ENCODE measurements at regions of chr12 and their contacts with region 1.

Region 1: GRCh38 chr12:6925540-6926279 is 2.0 kb upstream of the ATN1 start:
- DNase-seq: no peak
- ATAC-seq: no peak
- H3K4me3 ChIP-seq: no peak overlapping the region
- H3K4me3 Mint-ChIP-seq: peak overlapping the region; percentile 61 to 85 (median 82)
- H3K27ac ChIP-seq: no peak overlapping the region
- H3K27ac Mint-ChIP-seq: peak overlapping the region; percentile 31 to 44
- H3K4me1 ChIP-seq: peaks cover 10 to 38% of the 10 kb centered on the region in 2 experiments
- H3K4me1 Mint-ChIP-seq: peaks cover 36 to 54% (median 48%) of the 10 kb centered on the region in 3 donors
- H3K27me3 ChIP-seq: no peaks in the 10 kb centered on the region
- H3K27me3 Mint-ChIP-seq: no peaks in the 10 kb centered on the region

Region 2: DNA sequence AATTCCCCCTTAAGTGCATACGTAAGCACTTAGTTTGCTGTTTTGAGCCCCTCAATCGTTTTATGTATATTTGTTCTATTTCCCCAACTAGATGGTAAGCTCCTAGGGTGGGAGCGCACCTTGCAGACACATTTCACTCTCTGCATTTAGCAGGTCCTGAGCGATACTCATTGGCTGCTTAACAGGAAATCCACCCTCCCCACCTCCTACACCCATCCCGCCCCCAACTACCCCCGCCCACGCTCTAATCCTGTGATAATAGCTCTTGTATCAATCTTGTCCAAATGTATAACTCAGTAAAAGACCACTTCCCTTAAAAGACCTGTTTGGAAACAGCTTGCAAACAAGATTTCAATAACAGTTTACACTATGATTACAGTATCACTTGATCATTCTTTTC is 298.1 kb before region 1 on chr12:
- CTCF ChIA-PET with region 1: interaction called in 1 of 2 experiments, 10 read pairs
- POLR2A ChIA-PET with region 1: no interaction called
- DNase-seq: peak in 27 of 35 experiments; percentile 23 to 79 (median 51)
- ATAC-seq: peak; percentile 76 to 86 (median 80)
- H3K4me3 ChIP-seq: peak overlapping the region; percentile 45 to 49
- H3K4me3 Mint-ChIP-seq: peak overlapping the region; percentile 74 to 84 (median 82)
- H3K27ac ChIP-seq: peak overlapping the region; percentile 27
- H3K27ac Mint-ChIP-seq: peak overlapping the region; percentile 84 to 86
- H3K4me1 ChIP-seq: peaks cover 23 to 48% of the 10 kb centered on the region in 2 experiments
- H3K4me1 Mint-ChIP-seq: peaks cover 44 to 49% (median 45%) of the 10 kb centered on the region in 3 donors
- H3K27me3 ChIP-seq: no peaks in the 10 kb centered on the region
- H3K27me3 Mint-ChIP-seq: no peaks in the 10 kb centered on the region

Region 3: GRCh38 chr12:6723607-6724396 is 201.9 kb before region 1 on chr12 and contains the start of gene COPS7A:
- CTCF ChIA-PET with region 1: no interaction called
- POLR2A ChIA-PET with region 1: interaction called in 1 of 2 experiments, 17 read pairs
- DNase-seq: peak; percentile 85 to 96 (median 90)
- ATAC-seq: peak; percentile 90
- H3K4me3 ChIP-seq: peak within 1 kb of the TSS; percentile 58 to 65
- H3K4me3 Mint-ChIP-seq: peak within 1 kb of the TSS; percentile 84 to 87 (median 84)
- H3K27ac ChIP-seq: peak within 1 kb of the TSS; percentile 83
- H3K27ac Mint-ChIP-seq: peak within 1 kb of the TSS; percentile 91 to 99
- H3K4me1 ChIP-seq: peaks cover 10 to 16% of the 10 kb centered on the region in 2 experiments
- H3K4me1 Mint-ChIP-seq: peaks cover 24 to 30% (median 29%) of the 10 kb centered on the region in 3 donors
- H3K27me3 ChIP-seq: no peaks in the 10 kb centered on the region
- H3K27me3 Mint-ChIP-seq: no peaks in the 10 kb centered on the region
- total RNA-seq, gene COPS7A: 18.5 to 33.1 (median 31.8) TPM

Region 4: GRCh38 chr12:6937481-6938297 is 12.0 kb after region 1 on chr12:
- CTCF ChIA-PET with region 1: interaction called, 4 to 14 read pairs
- POLR2A ChIA-PET with region 1: interaction called in 1 of 2 experiments, 3 read pairs
- DNase-seq: peak; percentile 80 to 98 (median 92)
- ATAC-seq: peak; percentile 93 to 95 (median 94)
- H3K4me3 ChIP-seq: peak overlapping the region; percentile 62 to 72
- H3K4me3 Mint-ChIP-seq: peak overlapping the region; percentile 76 to 84 (median 83)
- H3K27ac ChIP-seq: peak overlapping the region; percentile 94
- H3K27ac Mint-ChIP-seq: peak overlapping the region; percentile 91 to 93
- H3K4me1 ChIP-seq: peaks cover 17 to 48% of the 10 kb centered on the region in 2 experiments
- H3K4me1 Mint-ChIP-seq: peaks cover 40 to 60% (median 46%) of the 10 kb centered on the region in 3 donors
- H3K27me3 ChIP-seq: no peaks in the 10 kb centered on the region
- H3K27me3 Mint-ChIP-seq: no peaks in the 10 kb centered on the region